H1 (cell line): ENCODE measurements at regions of chr9 and their contacts with region 1.

Region 1: GRCh38 chr9:33225319-33226149 is 14.4 kb upstream of the SPINK4 start:
- DNase-seq: peak in 1 of 2 experiments; percentile 60
- H3K4me3 ChIP-seq: no peak overlapping the region
- H3K27ac ChIP-seq: no peak overlapping the region
- H3K4me1 ChIP-seq: peaks cover 0 to 2% (median 0%) of the 10 kb centered on the region in 4 experiments; a peak in 2 of 7 replicates
- H3K27me3 ChIP-seq: no peaks in the 10 kb centered on the region
- CTCF ChIP-seq: peak in 2 of 3 experiments; percentile 52 to 65; a peak in 2 of 4 replicates
- EP300 ChIP-seq: no peak
- POLR2A ChIP-seq: no peak
- RAD21 ChIP-seq: peak; percentile 74 to 78

Region 2: GRCh38 chr9:32728181-32728580 is 497.4 kb before region 1 on chr9:
- CTCF ChIA-PET with region 1: no interaction called
- POLR2A ChIA-PET with region 1: no interaction called
- DNase-seq: no peak
- H3K4me3 ChIP-seq: no peak overlapping the region
- H3K27ac ChIP-seq: no peak overlapping the region
- H3K4me1 ChIP-seq: no peaks in the 10 kb centered on the region
- H3K27me3 ChIP-seq: no peaks in the 10 kb centered on the region
- CTCF ChIP-seq: no peak
- EP300 ChIP-seq: no peak
- POLR2A ChIP-seq: no peak
- RAD21 ChIP-seq: no peak

Region 3: GRCh38 chr9:33076358-33077004 is 149.1 kb before region 1 on chr9 and contains the start of gene SMU1:
- CTCF ChIA-PET with region 1: interaction called, 26 read pairs
- POLR2A ChIA-PET with region 1: interaction called, 3 read pairs
- DNase-seq: peak; percentile 92 to 95
- H3K4me3 ChIP-seq: peak within 1 kb of the TSS; percentile 91 to 99 (median 94)
- H3K27ac ChIP-seq: peak within 1 kb of the TSS; percentile 85
- H3K4me1 ChIP-seq: no peaks in the 10 kb centered on the region; a peak in 1 of 7 replicates
- H3K27me3 ChIP-seq: no peaks in the 10 kb centered on the region
- CTCF ChIP-seq: no peak
- EP300 ChIP-seq: no peak
- POLR2A ChIP-seq: peak; percentile 82 to 92
- RAD21 ChIP-seq: no peak
- total RNA-seq, gene SMU1: 25.2 and 26.0 TPM in 2 replicates

Region 4: GRCh38 chr9:33193855-33194254 is 31.7 kb before region 1 on chr9:
- CTCF ChIA-PET with region 1: interaction called, 11 read pairs
- POLR2A ChIA-PET with region 1: no interaction called
- DNase-seq: no peak
- H3K4me3 ChIP-seq: no peak overlapping the region
- H3K27ac ChIP-seq: no peak overlapping the region
- H3K4me1 ChIP-seq: no peaks in the 10 kb centered on the region
- H3K27me3 ChIP-seq: no peaks in the 10 kb centered on the region
- CTCF ChIP-seq: no peak
- EP300 ChIP-seq: no peak
- POLR2A ChIP-seq: no peak
- RAD21 ChIP-seq: no peak

Region 5: GRCh38 chr9:33211695-33212393 is 13.7 kb before region 1 on chr9:
- CTCF ChIA-PET with region 1: interaction called, 24 read pairs
- POLR2A ChIA-PET with region 1: no interaction called
- DNase-seq: no peak
- H3K4me3 ChIP-seq: no peak overlapping the region
- H3K27ac ChIP-seq: no peak overlapping the region
- H3K4me1 ChIP-seq: no peaks in the 10 kb centered on the region
- H3K27me3 ChIP-seq: no peaks in the 10 kb centered on the region; a peak in 1 of 7 replicates
- CTCF ChIP-seq: no peak
- EP300 ChIP-seq: no peak
- POLR2A ChIP-seq: no peak
- RAD21 ChIP-seq: no peak

Region 6: DNA sequence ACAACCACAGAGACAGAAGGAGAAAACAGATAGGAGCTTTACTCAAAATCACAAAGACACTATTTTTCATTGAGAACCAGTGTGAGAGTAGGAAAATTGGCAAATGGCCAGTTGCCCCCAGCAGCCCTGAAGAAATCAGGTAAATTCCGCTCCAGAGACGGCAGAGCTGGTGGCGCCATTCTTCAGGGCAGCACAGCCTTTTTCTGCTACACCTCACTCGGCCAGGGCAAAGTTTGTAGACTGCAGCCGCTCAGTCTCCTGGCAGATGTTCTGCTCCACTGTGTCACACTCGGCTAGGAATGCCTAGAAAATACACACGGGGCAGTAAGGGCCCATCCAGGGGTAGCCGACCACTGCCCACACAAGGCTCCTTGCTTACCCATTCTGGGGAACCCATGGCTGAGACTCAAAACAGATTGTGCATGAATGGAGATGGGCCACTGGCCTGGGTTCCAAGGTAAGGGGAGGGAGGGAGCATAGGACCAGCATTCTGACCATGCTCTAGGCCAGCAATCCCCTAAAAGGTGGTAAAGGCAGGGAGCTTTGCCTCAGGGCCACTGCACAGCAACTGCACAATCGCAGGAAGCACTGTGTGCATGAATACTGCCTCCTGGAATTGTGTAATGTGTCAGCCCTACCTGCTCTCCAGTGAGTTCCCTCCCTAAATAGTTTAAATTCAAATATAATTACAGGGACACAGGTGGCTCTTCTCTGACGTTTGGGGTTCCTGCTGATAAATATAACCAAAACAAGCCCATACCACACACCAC is 29.7 kb after region 1 on chr9:
- CTCF ChIA-PET with region 1: interaction called, 12 read pairs
- POLR2A ChIA-PET with region 1: no interaction called
- DNase-seq: no peak
- H3K4me3 ChIP-seq: no peak overlapping the region
- H3K27ac ChIP-seq: no peak overlapping the region
- H3K4me1 ChIP-seq: no peaks in the 10 kb centered on the region
- H3K27me3 ChIP-seq: no peaks in the 10 kb centered on the region
- CTCF ChIP-seq: no peak
- EP300 ChIP-seq: no peak
- POLR2A ChIP-seq: no peak
- RAD21 ChIP-seq: no peak